ENCODE measurements at regions of chr7 and their contacts with region 1.

Region 1: DNA sequence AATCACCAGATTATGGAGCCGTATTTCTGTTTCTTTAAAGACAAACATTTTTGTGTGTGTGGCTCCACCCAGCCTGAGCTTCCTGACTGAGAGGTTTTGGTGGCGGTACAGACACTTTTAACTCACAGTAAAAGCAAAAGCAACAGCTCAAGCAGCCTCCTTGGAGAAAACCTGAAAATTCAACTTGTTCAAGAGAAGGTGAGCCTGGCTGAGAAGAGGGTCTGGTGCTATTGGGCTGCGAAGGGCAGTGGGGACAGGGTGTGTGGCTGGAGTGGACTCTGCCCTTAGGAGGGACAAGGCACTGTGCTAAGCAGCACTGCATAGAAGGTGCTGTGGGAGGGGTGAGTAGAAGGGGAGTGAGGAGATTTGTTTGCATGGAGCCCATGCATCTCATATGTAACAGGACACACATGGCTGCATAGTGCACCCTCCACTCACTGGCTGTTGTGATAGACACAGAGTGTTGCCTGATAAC is at the start of gene GIMAP7:
- DNase-seq: peak; percentile 73
- H3K4me3 Mint-ChIP-seq: peak within 1 kb of the TSS; percentile 94
- H3K27ac Mint-ChIP-seq: peak within 1 kb of the TSS; percentile 97
- H3K4me1 Mint-ChIP-seq: peaks cover 52% of the 10 kb centered on the region
- H3K27me3 Mint-ChIP-seq: no peaks in the 10 kb centered on the region
- total RNA-seq, gene GIMAP7: 42.5 to 44.1 TPM

Region 2: GRCh38 chr7:150322833-150323681 is 191.7 kb before region 1 on chr7 and contains the starts of genes ACTR3C and LRRC61:
- CTCF ChIA-PET with region 1: no interaction called
- POLR2A ChIA-PET with region 1: no interaction called
- intact Hi-C with region 1: loop called (anchors 5 kb)
- DNase-seq: peak; percentile 79
- H3K4me3 Mint-ChIP-seq: peak within 1 kb of the TSS; percentile 97
- H3K27ac Mint-ChIP-seq: peak within 1 kb of the TSS; percentile 100
- H3K4me1 Mint-ChIP-seq: peaks cover 59% of the 10 kb centered on the region
- H3K27me3 Mint-ChIP-seq: no peaks in the 10 kb centered on the region
- total RNA-seq, gene ACTR3C: 8.0 to 8.8 TPM
- total RNA-seq, gene LRRC61: 26.1 to 27.1 TPM

Region 3: GRCh38 chr7:150502519-150502918 is 12.3 kb before region 1 on chr7:
- CTCF ChIA-PET with region 1: interaction called, 9 read pairs
- POLR2A ChIA-PET with region 1: interaction called, 42 read pairs
- intact Hi-C with region 1: loop called (anchors 1 kb)
- DNase-seq: peak; percentile 62
- H3K4me3 Mint-ChIP-seq: peak overlapping the region; percentile 36
- H3K27ac Mint-ChIP-seq: peak overlapping the region; percentile 98
- H3K4me1 Mint-ChIP-seq: peaks cover 82% of the 10 kb centered on the region
- H3K27me3 Mint-ChIP-seq: no peaks in the 10 kb centered on the region

Region 4: GRCh38 chr7:150531704-150532103 is 16.9 kb after region 1 on chr7:
- CTCF ChIA-PET with region 1: no interaction called
- POLR2A ChIA-PET with region 1: no interaction called
- intact Hi-C with region 1: no loop called
- DNase-seq: no peak
- H3K4me3 Mint-ChIP-seq: no peak overlapping the region
- H3K27ac Mint-ChIP-seq: no peak overlapping the region
- H3K4me1 Mint-ChIP-seq: peaks cover 6% of the 10 kb centered on the region
- H3K27me3 Mint-ChIP-seq: no peaks in the 10 kb centered on the region

Region 5: GRCh38 chr7:150567169-150567568 is 52.4 kb after region 1 on chr7 and contains the start of gene GIMAP4:
- CTCF ChIA-PET with region 1: interaction called, 5 read pairs
- POLR2A ChIA-PET with region 1: interaction called, 26 read pairs
- intact Hi-C with region 1: loop called (anchors 2 kb)
- DNase-seq: peak; percentile 55
- H3K4me3 Mint-ChIP-seq: peak within 1 kb of the TSS; percentile 94
- H3K27ac Mint-ChIP-seq: peak within 1 kb of the TSS; percentile 98
- H3K4me1 Mint-ChIP-seq: peaks cover 65% of the 10 kb centered on the region
- H3K27me3 Mint-ChIP-seq: no peaks in the 10 kb centered on the region
- total RNA-seq, gene GIMAP4: 128 to 140 TPM

Region 6: DNA sequence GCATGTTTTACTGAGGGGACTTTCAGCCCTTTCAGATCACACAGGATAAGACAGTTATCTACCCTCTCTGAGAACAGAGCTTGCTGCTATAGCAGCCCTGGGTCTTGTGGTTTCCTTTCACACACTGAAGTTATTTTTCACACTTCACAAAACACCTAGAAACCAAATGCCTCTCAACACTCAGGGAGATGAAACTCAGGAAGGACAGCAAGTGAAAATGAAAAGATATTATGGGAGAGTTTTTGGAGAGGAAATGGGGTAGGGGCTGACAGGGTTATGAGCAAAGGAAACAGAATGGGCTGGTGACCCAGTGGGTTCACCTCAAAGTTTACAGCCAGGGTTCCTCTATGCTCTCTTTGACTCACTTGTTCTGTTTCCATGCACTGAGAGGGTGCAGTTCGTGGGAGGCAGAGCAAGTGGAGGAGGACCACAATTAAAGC is 153.7 kb after region 1 on chr7:
- CTCF ChIA-PET with region 1: no interaction called
- POLR2A ChIA-PET with region 1: no interaction called
- intact Hi-C with region 1: loop called (anchors 5 kb)
- DNase-seq: peak; percentile 81
- H3K4me3 Mint-ChIP-seq: peak overlapping the region; percentile 18
- H3K27ac Mint-ChIP-seq: peak overlapping the region; percentile 98
- H3K4me1 Mint-ChIP-seq: peaks cover 82% of the 10 kb centered on the region
- H3K27me3 Mint-ChIP-seq: no peaks in the 10 kb centered on the region

Region 7: DNA sequence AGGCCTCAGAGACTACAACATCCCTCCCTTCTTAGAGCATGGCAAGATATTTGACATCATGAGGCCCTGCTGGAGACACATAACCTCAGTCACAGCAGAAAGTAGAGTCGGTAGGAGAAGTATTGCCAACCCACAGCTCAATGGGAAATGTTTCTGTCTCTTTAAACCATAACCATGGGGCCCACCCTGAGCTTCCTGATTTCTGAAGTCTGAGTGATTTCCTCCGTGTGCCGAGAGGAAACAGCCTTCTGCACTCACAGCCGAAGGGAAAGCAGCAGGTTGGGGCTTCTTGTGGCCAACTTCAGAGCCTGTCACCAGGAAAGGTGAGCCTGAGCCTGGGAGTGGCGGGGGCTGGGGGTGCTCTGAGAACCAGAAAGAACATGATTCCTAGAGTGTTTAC is 201.6 kb after region 1 on chr7 and contains the start of gene GIMAP1:
- CTCF ChIA-PET with region 1: interaction called, 4 read pairs
- POLR2A ChIA-PET with region 1: interaction called, 13 read pairs
- intact Hi-C with region 1: no loop called
- DNase-seq: peak; percentile 78
- H3K4me3 Mint-ChIP-seq: peak within 1 kb of the TSS; percentile 96
- H3K27ac Mint-ChIP-seq: peak within 1 kb of the TSS; percentile 92
- H3K4me1 Mint-ChIP-seq: peaks cover 50% of the 10 kb centered on the region
- H3K27me3 Mint-ChIP-seq: no peaks in the 10 kb centered on the region
- total RNA-seq, gene GIMAP1: 6.0 to 6.2 TPM